ENCODE measurements at regions of chr1 and their contacts with region 1.

Region 1: GRCh38 chr1:147046189-147046862 is 108.2 kb downstream of the NBPF12 start:
- DNase-seq: no peak
- H3K4me3 Mint-ChIP-seq: peak overlapping the region; percentile 63
- H3K27ac Mint-ChIP-seq: peak overlapping the region; percentile 91
- H3K4me1 Mint-ChIP-seq: peaks cover 42% of the 10 kb centered on the region
- H3K27me3 Mint-ChIP-seq: peaks cover 9% of the 10 kb centered on the region

Region 2: GRCh38 chr1:147084273-147085096 is 38.2 kb after region 1 on chr1:
- CTCF ChIA-PET with region 1: no interaction called
- POLR2A ChIA-PET with region 1: interaction called, 12 read pairs
- DNase-seq: peak; percentile 80
- H3K4me3 Mint-ChIP-seq: peak overlapping the region; percentile 87
- H3K27ac Mint-ChIP-seq: peak overlapping the region; percentile 100
- H3K4me1 Mint-ChIP-seq: peaks cover 41% of the 10 kb centered on the region
- H3K27me3 Mint-ChIP-seq: peaks cover 68% of the 10 kb centered on the region

Region 3: GRCh38 chr1:147204080-147204479 is 157.8 kb after region 1 on chr1:
- CTCF ChIA-PET with region 1: no interaction called
- POLR2A ChIA-PET with region 1: no interaction called
- DNase-seq: no peak
- H3K4me3 Mint-ChIP-seq: no peak overlapping the region
- H3K27ac Mint-ChIP-seq: no peak overlapping the region
- H3K4me1 Mint-ChIP-seq: peaks cover 2% of the 10 kb centered on the region
- H3K27me3 Mint-ChIP-seq: no peaks in the 10 kb centered on the region

Region 4: GRCh38 chr1:147486856-147487255 is 440.5 kb after region 1 on chr1:
- CTCF ChIA-PET with region 1: no interaction called
- POLR2A ChIA-PET with region 1: no interaction called
- DNase-seq: no peak
- H3K4me3 Mint-ChIP-seq: no peak overlapping the region
- H3K27ac Mint-ChIP-seq: no peak overlapping the region
- H3K4me1 Mint-ChIP-seq: no peaks in the 10 kb centered on the region
- H3K27me3 Mint-ChIP-seq: peaks cover 9% of the 10 kb centered on the region